HepG2 (cell line): ENCODE measurements at regions of chr14 and their contacts with region 1.

Region 1: DNA sequence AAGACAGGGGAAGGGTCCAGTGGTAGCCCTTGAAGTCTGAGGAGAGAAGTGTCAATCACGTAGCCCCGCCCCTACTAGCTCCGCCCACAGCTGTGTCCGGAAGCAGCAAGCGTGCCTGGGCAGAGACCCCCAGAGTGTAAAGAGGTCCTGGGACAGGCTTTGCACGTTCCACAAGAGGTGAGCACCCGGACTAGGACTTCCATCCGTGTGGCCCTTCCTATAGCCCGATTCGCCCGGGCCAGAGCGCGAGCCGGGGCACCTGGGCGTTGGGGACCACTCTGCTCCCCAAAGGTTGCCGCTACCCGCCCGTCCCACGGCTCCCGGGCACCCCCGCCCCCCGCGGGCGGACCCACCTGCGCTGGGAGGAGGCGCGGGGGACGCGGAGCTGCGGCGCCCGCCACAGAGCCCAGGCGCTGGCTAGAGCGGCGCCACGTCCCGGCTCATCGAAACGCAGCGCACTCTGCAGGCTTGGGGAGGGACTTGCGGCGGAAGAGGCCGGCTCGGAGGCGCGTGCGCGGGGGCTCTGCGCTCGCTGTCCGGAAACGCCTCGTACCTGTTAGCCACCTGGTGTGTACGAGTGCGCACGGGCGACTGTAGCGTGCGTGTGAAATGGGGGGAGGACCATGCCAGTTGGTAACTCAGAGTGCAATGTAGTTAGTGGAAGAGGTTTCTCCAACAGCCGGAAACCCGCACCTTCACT is at the start of gene RABGGTA:
- DNase-seq: peak; percentile 96
- ATAC-seq: peak; percentile 95
- H3K4me3 ChIP-seq: peak within 1 kb of the TSS; percentile 78 to 96 (median 78)
- H3K27ac ChIP-seq: peak within 1 kb of the TSS; percentile 92
- H3K4me1 ChIP-seq: peaks cover 22% of the 10 kb centered on the region
- H3K27me3 ChIP-seq: no peaks in the 10 kb centered on the region; a peak in 1 of 5 replicates
- CTCF ChIP-seq: peak; percentile 99
- EP300 ChIP-seq: peak; percentile 76 to 86; a peak in 3 of 4 replicates
- POLR2A ChIP-seq: peak in 1 of 2 experiments; percentile 96; a peak in 2 of 4 replicates
- RAD21 ChIP-seq: peak; percentile 91
- total RNA-seq, gene RABGGTA: 31.2 and 57.9 TPM in 2 replicates

Region 2: GRCh38 chr14:23555882-23556699 is 715.2 kb before region 1 on chr14 and contains the start of gene THTPA:
- CTCF ChIA-PET with region 1: no interaction called
- POLR2A ChIA-PET with region 1: no interaction called
- in situ Hi-C with region 1: no loop called
- intact Hi-C with region 1: no loop called
- DNase-seq: peak; percentile 96
- ATAC-seq: peak; percentile 87
- H3K4me3 ChIP-seq: peak within 1 kb of the TSS; percentile 83 to 97 (median 84)
- H3K27ac ChIP-seq: peak within 1 kb of the TSS; percentile 89
- H3K4me1 ChIP-seq: peaks cover 60% of the 10 kb centered on the region
- H3K27me3 ChIP-seq: no peaks in the 10 kb centered on the region; a peak in 1 of 5 replicates
- CTCF ChIP-seq: peak; percentile 41
- EP300 ChIP-seq: peak in 1 of 2 experiments; percentile 54; a peak in 1 of 4 replicates
- POLR2A ChIP-seq: peak in 1 of 2 experiments; percentile 93; a peak in 2 of 4 replicates
- RAD21 ChIP-seq: peak; percentile 71
- total RNA-seq, gene THTPA: 7.1 and 7.4 TPM in 2 replicates

Region 3: DNA sequence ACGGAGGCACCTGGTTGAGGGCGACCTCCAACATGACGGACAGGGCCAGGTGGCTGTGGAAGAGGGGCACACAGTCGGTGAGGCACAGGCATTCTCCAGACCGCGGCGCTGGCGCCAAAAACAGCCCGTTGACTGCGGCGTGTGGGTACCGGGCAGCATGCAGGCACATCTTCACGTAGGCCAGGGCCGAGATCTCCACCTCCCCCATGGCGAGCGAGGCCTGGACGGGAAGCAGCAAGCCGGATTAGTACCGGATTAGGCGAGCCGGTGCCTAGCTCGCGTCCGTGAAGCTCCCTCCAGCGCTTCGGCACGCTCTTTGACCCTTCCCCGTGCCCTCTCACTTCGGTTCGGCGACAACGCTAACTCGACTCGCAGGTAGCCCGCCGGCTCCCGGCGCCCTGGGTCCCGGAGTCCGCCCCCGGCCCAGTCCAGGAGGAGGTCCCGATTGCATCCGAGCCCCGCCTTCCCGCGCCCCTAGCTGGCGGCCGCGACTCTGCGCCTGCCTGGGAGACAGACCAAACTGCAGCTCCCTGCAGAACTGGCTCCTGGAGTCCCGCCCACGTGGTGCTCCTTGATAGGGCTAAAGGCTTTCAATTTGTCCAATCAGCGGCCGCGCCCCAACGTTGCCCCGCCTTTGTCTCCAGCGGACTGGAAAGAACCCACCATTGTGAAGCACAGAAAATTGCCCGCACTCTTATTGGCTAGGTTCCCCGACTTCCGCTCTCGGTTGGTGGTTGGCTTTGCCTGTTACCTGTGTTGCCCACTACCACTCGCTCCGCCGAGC is 130.0 kb before region 1 on chr14 and contains the start of gene EMC9:
- CTCF ChIA-PET with region 1: no interaction called
- POLR2A ChIA-PET with region 1: interaction called, 21 read pairs
- in situ Hi-C with region 1: no loop called
- intact Hi-C with region 1: no loop called
- DNase-seq: peak; percentile 100
- ATAC-seq: peak; percentile 88
- H3K4me3 ChIP-seq: peak within 1 kb of the TSS; percentile 83 to 99 (median 95)
- H3K27ac ChIP-seq: peak within 1 kb of the TSS; percentile 86
- H3K4me1 ChIP-seq: peaks cover 77% of the 10 kb centered on the region
- H3K27me3 ChIP-seq: peaks cover 0 to 3% of the 10 kb centered on the region in 2 experiments; a peak in 1 of 5 replicates
- CTCF ChIP-seq: peak; percentile 53
- EP300 ChIP-seq: peak in 1 of 2 experiments; percentile 70; a peak in 2 of 4 replicates
- POLR2A ChIP-seq: peak in 1 of 2 experiments; percentile 88; a peak in 2 of 4 replicates
- RAD21 ChIP-seq: peak; percentile 84
- total RNA-seq, gene EMC9: 71.2 and 78.7 TPM in 2 replicates

Region 4: GRCh38 chr14:24188251-24189058 is 82.8 kb before region 1 on chr14 and contains the start of gene IPO4:
- CTCF ChIA-PET with region 1: no interaction called
- POLR2A ChIA-PET with region 1: interaction called, 15 read pairs
- in situ Hi-C with region 1: no loop called
- intact Hi-C with region 1: no loop called
- DNase-seq: peak; percentile 100
- ATAC-seq: peak; percentile 88
- H3K4me3 ChIP-seq: peak within 1 kb of the TSS; percentile 70 to 92 (median 77)
- H3K27ac ChIP-seq: peak within 1 kb of the TSS; percentile 64
- H3K4me1 ChIP-seq: peaks cover 42% of the 10 kb centered on the region
- H3K27me3 ChIP-seq: no peaks in the 10 kb centered on the region
- CTCF ChIP-seq: peak; percentile 49
- EP300 ChIP-seq: peak; percentile 85 to 87; a peak in 3 of 4 replicates
- POLR2A ChIP-seq: peak in 1 of 2 experiments; percentile 98; a peak in 2 of 4 replicates
- RAD21 ChIP-seq: peak; percentile 77
- total RNA-seq, gene IPO4: 149 and 179 TPM in 2 replicates

Region 5: GRCh38 chr14:24232121-24232644 is 39.1 kb before region 1 on chr14 and contains the start of gene NEDD8:
- CTCF ChIA-PET with region 1: no interaction called
- POLR2A ChIA-PET with region 1: interaction called, 435 read pairs
- in situ Hi-C with region 1: no loop called
- intact Hi-C with region 1: no loop called
- DNase-seq: peak; percentile 99
- ATAC-seq: peak; percentile 85
- H3K4me3 ChIP-seq: peak within 1 kb of the TSS; percentile 83 to 91 (median 85)
- H3K27ac ChIP-seq: peak within 1 kb of the TSS; percentile 84
- H3K4me1 ChIP-seq: peaks cover 47% of the 10 kb centered on the region
- H3K27me3 ChIP-seq: peaks cover 0 to 4% of the 10 kb centered on the region in 2 experiments; a peak in 1 of 5 replicates
- CTCF ChIP-seq: no peak; the same call in none of the 2 replicates
- EP300 ChIP-seq: no peak; a peak in 1 of 4 replicates
- POLR2A ChIP-seq: peak in 1 of 2 experiments; percentile 63; a peak in 2 of 4 replicates
- RAD21 ChIP-seq: no peak; the same call in 1 of the 2 replicates
- total RNA-seq, gene NEDD8: 713 and 818 TPM in 2 replicates

Region 6: GRCh38 chr14:24284491-24285035 is 13.3 kb after region 1 on chr14:
- CTCF ChIA-PET with region 1: no interaction called
- POLR2A ChIA-PET with region 1: interaction called, 42 read pairs
- in situ Hi-C with region 1: no loop called
- intact Hi-C with region 1: no loop called
- DNase-seq: no peak
- ATAC-seq: peak; percentile 3; the same call in 1 of the 3 replicates
- H3K4me3 ChIP-seq: no peak overlapping the region
- H3K27ac ChIP-seq: no peak overlapping the region
- H3K4me1 ChIP-seq: no peaks in the 10 kb centered on the region
- H3K27me3 ChIP-seq: no peaks in the 10 kb centered on the region
- CTCF ChIP-seq: no peak
- EP300 ChIP-seq: no peak
- POLR2A ChIP-seq: no peak
- RAD21 ChIP-seq: no peak

Region 7: DNA sequence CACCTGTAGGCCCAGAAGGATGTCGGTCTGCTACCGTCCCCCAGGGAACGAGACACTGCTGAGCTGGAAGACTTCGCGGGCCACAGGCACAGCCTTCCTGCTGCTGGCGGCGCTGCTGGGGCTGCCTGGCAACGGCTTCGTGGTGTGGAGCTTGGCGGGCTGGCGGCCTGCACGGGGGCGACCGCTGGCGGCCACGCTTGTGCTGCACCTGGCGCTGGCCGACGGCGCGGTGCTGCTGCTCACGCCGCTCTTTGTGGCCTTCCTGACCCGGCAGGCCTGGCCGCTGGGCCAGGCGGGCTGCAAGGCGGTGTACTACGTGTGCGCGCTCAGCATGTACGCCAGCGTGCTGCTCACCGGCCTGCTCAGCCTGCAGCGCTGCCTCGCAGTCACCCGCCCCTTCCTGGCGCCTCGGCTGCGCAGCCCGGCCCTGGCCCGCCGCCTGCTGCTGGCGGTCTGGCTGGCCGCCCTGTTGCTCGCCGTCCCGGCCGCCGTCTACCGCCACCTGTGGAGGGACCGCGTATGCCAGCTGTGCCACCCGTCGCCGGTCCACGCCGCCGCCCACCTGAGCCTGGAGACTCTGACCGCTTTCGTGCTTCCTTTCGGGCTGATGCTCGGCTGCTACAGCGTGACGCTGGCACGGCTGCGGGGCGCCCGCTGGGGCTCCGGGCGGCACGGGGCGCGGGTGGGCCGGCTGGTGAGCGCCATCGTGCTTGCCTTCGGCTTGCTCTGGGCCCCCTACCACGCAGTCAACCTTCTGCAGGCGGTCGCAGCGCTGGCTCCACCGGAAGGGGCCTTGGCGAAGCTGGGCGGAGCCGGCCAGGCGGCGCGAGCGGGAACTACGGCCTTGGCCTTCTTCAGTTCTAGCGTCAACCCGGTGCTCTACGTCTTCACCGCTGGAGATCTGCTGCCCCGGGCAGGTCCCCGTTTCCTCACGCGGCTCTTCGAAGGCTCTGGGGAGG is 39.6 kb after region 1 on chr14 and contains the start of gene LTB4R:
- CTCF ChIA-PET with region 1: no interaction called
- POLR2A ChIA-PET with region 1: interaction called, 98 read pairs
- in situ Hi-C with region 1: no loop called
- intact Hi-C with region 1: no loop called
- DNase-seq: no peak
- ATAC-seq: no peak
- H3K4me3 ChIP-seq: no peak within 1 kb of the TSS
- H3K27ac ChIP-seq: peak within 1 kb of the TSS; percentile 4
- H3K4me1 ChIP-seq: peaks cover 61% of the 10 kb centered on the region
- H3K27me3 ChIP-seq: no peaks in the 10 kb centered on the region; a peak in 1 of 5 replicates
- CTCF ChIP-seq: no peak
- EP300 ChIP-seq: no peak
- POLR2A ChIP-seq: no peak
- RAD21 ChIP-seq: no peak
- total RNA-seq, gene LTB4R: 1.00 and 3.2 TPM in 2 replicates

Region 8: GRCh38 chr14:24442273-24443052 is 171.2 kb after region 1 on chr14 and contains the start of gene SDR39U1:
- CTCF ChIA-PET with region 1: no interaction called
- POLR2A ChIA-PET with region 1: interaction called, 19 read pairs
- in situ Hi-C with region 1: no loop called
- intact Hi-C with region 1: no loop called
- DNase-seq: peak; percentile 100
- ATAC-seq: peak; percentile 91
- H3K4me3 ChIP-seq: peak within 1 kb of the TSS; percentile 74 to 98 (median 84)
- H3K27ac ChIP-seq: peak within 1 kb of the TSS; percentile 93
- H3K4me1 ChIP-seq: peaks cover 18% of the 10 kb centered on the region
- H3K27me3 ChIP-seq: peaks cover 0 to 5% of the 10 kb centered on the region in 2 experiments; a peak in 1 of 5 replicates
- CTCF ChIP-seq: peak; percentile 50
- EP300 ChIP-seq: 0 out of 4 replicates have a peak, but pooled peaks have one; percentile 44 to 47
- POLR2A ChIP-seq: peak in 1 of 2 experiments; percentile 98; a peak in 2 of 4 replicates
- RAD21 ChIP-seq: no peak; the same call in 1 of the 2 replicates
- total RNA-seq, gene SDR39U1: 25.0 and 34.4 TPM in 2 replicates